PC-9 (cell line): ENCODE measurements at regions of chr3 and their contacts with region 1.

Region 1: DNA sequence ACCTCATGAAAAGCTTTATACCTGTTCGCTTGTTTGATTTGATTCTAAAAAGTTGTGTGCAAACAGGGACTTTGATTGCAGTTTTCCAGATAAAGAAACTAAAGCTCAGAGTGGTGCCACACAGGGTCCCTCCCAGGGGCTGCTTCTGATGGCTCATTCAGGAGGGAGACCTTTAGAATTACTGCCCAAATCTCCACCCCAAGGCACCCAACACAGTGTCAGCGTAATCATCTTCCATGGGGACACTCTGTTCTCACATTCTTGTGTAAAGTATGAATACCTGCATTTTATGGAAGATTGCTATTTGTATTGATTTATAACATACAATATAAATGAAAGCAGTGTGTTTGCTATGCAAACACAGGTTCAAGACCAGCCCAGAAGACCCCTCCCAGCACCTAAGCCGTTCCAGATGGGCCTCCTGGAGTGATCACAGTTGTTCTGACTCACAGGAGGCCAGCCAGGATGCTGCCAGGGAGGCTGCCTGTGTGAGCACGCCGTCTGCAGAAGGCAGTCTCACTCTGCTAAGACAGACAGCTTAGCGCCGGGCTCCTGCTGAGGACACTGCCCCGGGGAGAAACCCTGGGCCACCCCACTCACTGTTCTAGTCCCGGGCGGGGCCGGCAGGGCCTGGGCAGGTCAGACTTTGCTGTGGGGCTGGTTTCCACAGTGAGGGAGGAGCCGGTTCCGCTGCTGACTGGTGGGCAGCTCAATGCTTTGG is 185.6 kb downstream of the FAM43A start:
- DNase-seq: peak; percentile 83 to 94
- H3K4me3 ChIP-seq: peak overlapping the region; percentile 14; the same call in 1 of the 2 replicates
- H3K27ac ChIP-seq: peak overlapping the region; percentile 91
- H3K4me1 ChIP-seq: peaks cover 50% of the 10 kb centered on the region
- H3K27me3 ChIP-seq: no peaks in the 10 kb centered on the region
- CTCF ChIP-seq: peak; percentile 20; the same call in 1 of the 2 replicates

Region 2: GRCh38 chr3:194740859-194741491 is 130.3 kb before region 1 on chr3:
- CTCF ChIA-PET with region 1: interaction called, 7 read pairs
- POLR2A ChIA-PET with region 1: interaction called, 4 read pairs
- intact Hi-C with region 1: loop called (anchors 1 kb)
- DNase-seq: peak; percentile 86 to 100
- H3K4me3 ChIP-seq: peak overlapping the region; percentile 30; the same call in 1 of the 2 replicates
- H3K27ac ChIP-seq: peak overlapping the region; percentile 80
- H3K4me1 ChIP-seq: peaks cover 42% of the 10 kb centered on the region
- H3K27me3 ChIP-seq: no peaks in the 10 kb centered on the region
- CTCF ChIP-seq: no peak

Region 3: DNA sequence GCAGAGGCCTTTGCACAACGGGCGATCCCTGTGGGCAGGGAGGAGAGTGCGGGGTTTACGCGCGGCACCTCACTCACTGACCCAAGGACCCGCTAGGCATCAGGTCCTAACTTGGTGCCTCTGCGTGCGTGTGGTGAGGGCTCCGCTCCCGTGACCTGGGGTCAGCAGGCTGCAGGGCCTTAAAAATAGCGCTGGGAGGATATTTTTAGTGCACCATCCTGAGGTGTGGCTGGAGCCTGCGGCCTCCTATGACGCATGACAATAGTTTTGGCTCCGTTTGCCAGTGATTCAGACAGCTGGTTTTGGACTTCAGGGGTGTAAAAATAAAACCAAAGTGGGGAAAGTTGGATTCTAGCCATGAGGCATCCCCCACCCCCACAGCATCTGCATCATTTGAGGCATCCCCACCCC is 46.6 kb before region 1 on chr3:
- CTCF ChIA-PET with region 1: no interaction called
- POLR2A ChIA-PET with region 1: no interaction called
- intact Hi-C with region 1: no loop called
- DNase-seq: peak in 1 of 2 experiments; percentile 9
- H3K4me3 ChIP-seq: no peak overlapping the region
- H3K27ac ChIP-seq: no peak overlapping the region
- H3K4me1 ChIP-seq: no peaks in the 10 kb centered on the region
- H3K27me3 ChIP-seq: no peaks in the 10 kb centered on the region
- CTCF ChIP-seq: no peak

Region 4: DNA sequence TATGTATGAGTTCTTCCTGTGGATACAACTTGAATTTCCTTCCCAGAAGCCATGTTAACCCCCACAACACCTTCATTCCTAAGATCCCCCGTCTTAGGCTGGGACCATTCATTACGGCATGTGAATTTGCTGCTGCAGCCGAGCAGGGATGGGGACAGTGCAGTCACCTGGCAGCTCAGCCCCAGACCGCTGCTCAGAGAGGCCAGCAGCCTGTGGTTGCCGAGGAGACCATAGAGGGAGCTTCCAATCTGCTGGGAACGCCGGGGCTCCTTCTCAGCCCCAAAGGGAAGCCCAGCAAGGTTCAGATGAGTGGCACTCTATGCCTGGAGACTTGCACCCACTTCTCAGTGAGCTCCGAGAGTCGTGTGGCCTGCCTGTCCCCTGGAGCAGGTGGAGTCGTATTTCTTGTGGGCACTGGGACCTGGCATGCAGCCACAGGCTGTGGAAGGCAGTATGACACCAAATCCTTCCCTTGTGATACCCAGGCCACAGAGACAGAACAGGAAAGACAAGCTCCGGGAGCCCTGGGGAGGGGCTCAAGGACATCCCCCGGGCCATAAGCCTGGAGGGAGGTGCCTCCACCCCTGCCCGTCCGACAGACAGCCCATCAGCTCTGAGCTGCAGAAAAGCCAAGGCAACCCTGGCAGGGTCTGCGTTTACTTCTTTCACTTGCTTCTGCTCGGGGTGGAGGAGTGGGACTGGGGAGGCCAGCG is 18.3 kb before region 1 on chr3:
- CTCF ChIA-PET with region 1: no interaction called
- POLR2A ChIA-PET with region 1: interaction called, 4 read pairs
- intact Hi-C with region 1: loop called (anchors 1 kb)
- DNase-seq: peak; percentile 70 to 92
- H3K4me3 ChIP-seq: no peak overlapping the region
- H3K27ac ChIP-seq: no peak overlapping the region
- H3K4me1 ChIP-seq: peaks cover 11% of the 10 kb centered on the region
- H3K27me3 ChIP-seq: no peaks in the 10 kb centered on the region
- CTCF ChIP-seq: no peak

Region 5: GRCh38 chr3:195001961-195002861 is 130.9 kb after region 1 on chr3:
- CTCF ChIA-PET with region 1: interaction called, 4 read pairs
- POLR2A ChIA-PET with region 1: no interaction called
- intact Hi-C with region 1: loop called (anchors 5 kb)
- DNase-seq: peak; percentile 90 to 92
- H3K4me3 ChIP-seq: no peak overlapping the region
- H3K27ac ChIP-seq: no peak overlapping the region
- H3K4me1 ChIP-seq: peaks cover 25% of the 10 kb centered on the region
- H3K27me3 ChIP-seq: no peaks in the 10 kb centered on the region
- CTCF ChIP-seq: peak; percentile 85

Region 6: DNA sequence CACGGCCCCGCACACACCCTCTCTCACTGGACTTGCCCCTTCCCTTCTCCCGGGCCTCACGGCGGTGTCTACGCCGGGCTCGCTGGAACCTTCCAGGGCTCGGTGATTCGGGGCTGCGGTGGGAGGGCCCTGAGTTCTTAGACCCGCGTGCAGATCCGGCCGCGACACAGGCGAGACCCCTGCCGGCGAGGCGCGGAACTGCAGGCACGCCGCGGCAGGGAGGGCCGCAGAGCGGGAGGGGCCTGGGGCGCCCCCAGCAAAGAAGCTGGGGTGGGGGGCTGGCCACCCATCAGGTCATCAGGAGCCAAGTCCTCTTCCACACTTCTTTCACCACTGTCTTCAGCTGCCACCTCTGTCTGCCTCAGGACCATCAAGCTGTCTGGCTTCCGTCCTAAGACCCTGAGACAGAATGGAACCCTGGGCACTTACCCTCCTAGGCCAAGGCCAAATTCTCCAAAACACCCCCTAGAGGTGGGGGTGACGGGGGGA is 235.2 kb after region 1 on chr3:
- CTCF ChIA-PET with region 1: interaction called, 3 read pairs
- POLR2A ChIA-PET with region 1: no interaction called
- intact Hi-C with region 1: loop called (anchors 1 kb)
- DNase-seq: peak in 1 of 2 experiments; percentile 72
- H3K4me3 ChIP-seq: no peak overlapping the region; the same call in 1 of the 2 replicates
- H3K27ac ChIP-seq: no peak overlapping the region
- H3K4me1 ChIP-seq: peaks cover 40% of the 10 kb centered on the region
- H3K27me3 ChIP-seq: no peaks in the 10 kb centered on the region
- CTCF ChIP-seq: peak; percentile 100